GM12878 (cell line): ENCODE measurements at regions of chr3 and their contacts with region 1.

Region 1: DNA sequence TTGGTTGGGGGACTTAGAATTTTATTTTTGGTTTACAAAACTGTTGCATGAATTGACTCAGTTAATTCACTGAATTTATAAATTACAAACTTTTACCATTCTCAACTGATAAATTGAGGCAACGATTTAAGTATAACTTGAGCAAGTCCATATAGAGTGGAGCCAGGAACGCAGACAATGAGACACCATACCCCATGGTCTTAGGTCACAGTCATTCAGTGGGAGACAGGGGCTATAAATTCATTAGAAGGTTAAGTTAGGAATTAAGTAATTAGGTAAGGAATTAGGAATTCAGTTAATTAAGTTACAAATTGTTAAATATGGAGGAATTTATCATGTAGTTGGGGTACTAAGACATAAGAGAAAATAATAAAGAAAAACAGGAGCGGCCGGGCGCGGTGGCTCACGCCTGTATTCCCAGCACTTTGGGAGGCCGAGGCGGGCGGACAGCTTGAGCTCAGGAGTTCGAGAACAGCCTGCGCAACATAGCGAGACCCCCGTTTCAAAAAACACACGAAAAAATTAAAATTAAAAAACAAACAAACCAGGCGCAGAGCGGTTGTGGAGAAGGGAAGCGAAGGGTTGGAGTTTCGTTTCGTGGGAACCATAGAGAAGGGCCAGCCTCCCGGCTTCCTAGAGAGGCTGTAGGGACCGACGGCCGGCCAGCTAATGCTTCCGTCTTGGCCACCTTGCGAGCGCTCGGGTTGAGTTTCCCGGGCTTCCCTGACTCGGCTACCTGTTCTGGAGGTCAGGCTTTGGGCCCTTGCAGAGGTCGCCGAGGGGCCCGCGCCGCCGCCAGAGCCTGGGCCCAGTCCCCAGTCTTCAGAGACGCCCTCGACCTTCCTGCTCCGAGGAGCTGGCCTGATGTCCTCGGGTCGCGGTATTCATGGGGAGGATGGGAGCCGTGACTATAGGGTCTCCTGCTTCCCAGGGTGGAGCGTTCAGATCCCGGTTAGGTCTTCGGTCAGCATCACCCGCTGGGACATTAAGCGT is at the start of gene ZNF619:
- DNase-seq: no peak
- ATAC-seq: peak; percentile 90
- H3K4me3 ChIP-seq: peak within 1 kb of the TSS; percentile 72
- H3K27ac ChIP-seq: peak within 1 kb of the TSS; percentile 51
- H3K4me1 ChIP-seq: 0 out of 2 replicates have a peak, but pooled peaks cover 2% of the 10 kb centered on the region
- H3K27me3 ChIP-seq: no peaks in the 10 kb centered on the region
- CTCF ChIP-seq: no peak
- EP300 ChIP-seq: no peak
- POLR2A ChIP-seq: peak; percentile 64; the same call in 1 of the 2 replicates
- RAD21 ChIP-seq: no peak
- polyA plus RNA-seq, gene ZNF619: 0.42 to 0.89 TPM

Region 2: DNA sequence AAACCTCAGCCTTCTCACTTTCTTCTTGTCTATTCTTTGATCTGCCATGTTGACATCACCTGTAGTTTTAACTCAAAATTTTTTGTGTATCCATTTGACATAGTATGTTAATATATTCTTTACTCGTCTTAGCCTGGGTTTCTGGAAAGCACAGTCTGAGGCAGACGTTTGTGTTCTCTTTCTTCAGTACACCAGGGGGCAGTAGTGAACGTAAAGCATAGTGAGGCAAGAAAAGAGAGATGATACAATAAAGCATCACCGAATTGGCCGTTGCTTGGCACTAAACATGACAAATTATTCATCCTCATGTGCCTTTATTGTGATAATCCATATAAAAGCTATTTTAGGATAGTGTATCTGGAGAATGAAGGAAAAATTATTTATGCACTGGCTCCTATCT is 808.4 kb before region 1 on chr3:
- CTCF ChIA-PET with region 1: no interaction called
- POLR2A ChIA-PET with region 1: no interaction called
- RAD21 ChIA-PET with region 1: no interaction called
- SMC1A ChIA-PET with region 1: no interaction called
- in situ Hi-C with region 1: no loop called
- intact Hi-C with region 1: no loop called
- DNase-seq: no peak
- ATAC-seq: peak; percentile 85
- H3K4me3 ChIP-seq: no peak overlapping the region
- H3K27ac ChIP-seq: no peak overlapping the region
- H3K4me1 ChIP-seq: no peaks in the 10 kb centered on the region
- H3K27me3 ChIP-seq: no peaks in the 10 kb centered on the region; a peak in 2 of 4 replicates
- CTCF ChIP-seq: peak; percentile 53 to 60 (median 58)
- EP300 ChIP-seq: no peak
- POLR2A ChIP-seq: no peak
- RAD21 ChIP-seq: peak; percentile 48

Region 3: DNA sequence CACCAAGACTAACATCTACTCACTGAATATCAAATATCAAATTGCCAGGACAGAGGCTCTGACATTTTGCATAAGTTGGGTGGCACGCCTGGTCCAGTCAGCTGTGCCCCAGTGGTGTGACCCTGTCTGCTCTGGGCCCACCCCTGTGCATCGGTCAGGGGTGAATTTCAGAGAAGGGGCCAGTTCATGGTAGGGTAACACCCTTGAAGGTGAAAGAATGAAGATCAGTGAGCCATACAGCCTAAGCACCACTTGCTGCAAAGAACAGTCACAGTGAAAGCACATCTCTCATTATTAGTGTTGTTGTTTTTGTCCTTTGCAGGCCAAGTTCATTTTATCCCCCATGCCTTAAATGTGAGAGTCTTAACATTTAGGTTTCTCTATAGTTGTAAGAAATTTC is 580.6 kb before region 1 on chr3:
- CTCF ChIA-PET with region 1: no interaction called
- POLR2A ChIA-PET with region 1: no interaction called
- RAD21 ChIA-PET with region 1: no interaction called
- SMC1A ChIA-PET with region 1: no interaction called
- in situ Hi-C with region 1: no loop called
- intact Hi-C with region 1: no loop called
- DNase-seq: no peak
- ATAC-seq: peak; percentile 57; the same call in 2 of the 3 replicates
- H3K4me3 ChIP-seq: no peak overlapping the region
- H3K27ac ChIP-seq: no peak overlapping the region
- H3K4me1 ChIP-seq: no peaks in the 10 kb centered on the region
- H3K27me3 ChIP-seq: no peaks in the 10 kb centered on the region
- CTCF ChIP-seq: no peak
- EP300 ChIP-seq: peak in 1 of 2 experiments; percentile 28; a peak in 1 of 4 replicates
- POLR2A ChIP-seq: no peak
- RAD21 ChIP-seq: no peak

Region 4: GRCh38 chr3:40452876-40453730 is 23.7 kb before region 1 on chr3:
- CTCF ChIA-PET with region 1: interaction called, 4 read pairs
- POLR2A ChIA-PET with region 1: interaction called, 20 read pairs
- RAD21 ChIA-PET with region 1: interaction called, 4 read pairs
- SMC1A ChIA-PET with region 1: no interaction called
- in situ Hi-C with region 1: no loop called
- intact Hi-C with region 1: loop called (anchors 2 kb)
- DNase-seq: peak; percentile 93
- ATAC-seq: peak; percentile 95
- H3K4me3 ChIP-seq: peak overlapping the region; percentile 82
- H3K27ac ChIP-seq: peak overlapping the region; percentile 81
- H3K4me1 ChIP-seq: no peaks in the 10 kb centered on the region; the same call in 1 of the 2 replicates
- H3K27me3 ChIP-seq: no peaks in the 10 kb centered on the region
- CTCF ChIP-seq: no peak
- EP300 ChIP-seq: no peak
- POLR2A ChIP-seq: peak; percentile 87
- RAD21 ChIP-seq: no peak

Region 5: GRCh38 chr3:40505599-40506462 is 29.1 kb after region 1 on chr3 and contains the start of gene ZNF620:
- CTCF ChIA-PET with region 1: interaction called, 18 read pairs
- POLR2A ChIA-PET with region 1: no interaction called
- RAD21 ChIA-PET with region 1: interaction called, 3 read pairs
- SMC1A ChIA-PET with region 1: interaction called, 5 read pairs
- in situ Hi-C with region 1: no loop called
- intact Hi-C with region 1: no loop called
- DNase-seq: no peak
- ATAC-seq: peak; percentile 95
- H3K4me3 ChIP-seq: peak within 1 kb of the TSS; percentile 75
- H3K27ac ChIP-seq: peak within 1 kb of the TSS; percentile 53; the same call in 1 of the 2 replicates
- H3K4me1 ChIP-seq: peaks cover 5% of the 10 kb centered on the region; the same call in 1 of the 2 replicates
- H3K27me3 ChIP-seq: no peaks in the 10 kb centered on the region
- CTCF ChIP-seq: peak; percentile 40 to 61 (median 48); a peak in 5 of 6 replicates
- EP300 ChIP-seq: no peak
- POLR2A ChIP-seq: no peak
- RAD21 ChIP-seq: 0 out of 2 replicates have a peak, but pooled peaks have one; percentile 2
- polyA plus RNA-seq, gene ZNF620: 1.3 to 1.7 TPM

Region 6: GRCh38 chr3:40524568-40525285 is 48.0 kb after region 1 on chr3 and contains the start of gene ZNF621:
- CTCF ChIA-PET with region 1: interaction called, 4 read pairs
- POLR2A ChIA-PET with region 1: interaction called, 5 read pairs
- RAD21 ChIA-PET with region 1: interaction called, 3 read pairs
- SMC1A ChIA-PET with region 1: interaction called, 4 read pairs
- in situ Hi-C with region 1: no loop called
- intact Hi-C with region 1: loop called (anchors 5 kb)
- DNase-seq: peak; percentile 43
- ATAC-seq: peak; percentile 98
- H3K4me3 ChIP-seq: peak within 1 kb of the TSS; percentile 95
- H3K27ac ChIP-seq: peak within 1 kb of the TSS; percentile 73
- H3K4me1 ChIP-seq: no peaks in the 10 kb centered on the region
- H3K27me3 ChIP-seq: no peaks in the 10 kb centered on the region
- CTCF ChIP-seq: no peak; a peak in 1 of 6 replicates
- EP300 ChIP-seq: no peak
- POLR2A ChIP-seq: peak; percentile 98
- RAD21 ChIP-seq: no peak
- polyA plus RNA-seq, gene ZNF621: 2.9 to 4.3 TPM